Activated B cell treated with CpG ODN at 0.5 μM for 24 hours (primary cell): ENCODE measurements at regions of chr5 and their contacts with region 1.

Region 1: DNA sequence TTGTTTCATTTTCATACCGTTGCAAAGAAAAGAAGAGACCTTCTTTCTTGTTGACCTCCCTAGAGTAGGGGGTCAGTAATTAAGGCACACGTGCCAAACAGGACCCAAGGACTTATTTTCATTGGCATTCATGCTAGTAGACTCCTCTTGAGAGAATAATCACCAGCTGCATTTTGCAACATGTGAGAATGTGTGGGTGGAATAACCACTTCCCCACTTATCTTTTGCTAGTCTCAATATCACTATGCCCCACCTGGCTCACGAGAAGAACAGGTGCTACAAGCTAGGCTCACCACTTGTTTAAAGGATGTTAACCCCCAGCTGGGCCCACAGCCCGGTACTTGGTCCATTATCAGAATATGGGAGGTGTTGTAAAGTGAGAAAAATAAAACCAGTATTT is 460.7 kb upstream of the MEF2C start:
- DNase-seq: peak; percentile 29
- ATAC-seq: peak; percentile 79
- H3K4me3 Mint-ChIP-seq: peak overlapping the region; percentile 42
- H3K27ac Mint-ChIP-seq: peak overlapping the region; percentile 80
- H3K4me1 Mint-ChIP-seq: peaks cover 49% of the 10 kb centered on the region
- H3K27me3 Mint-ChIP-seq: no peaks in the 10 kb centered on the region
- CTCF ChIP-seq: no peak

Region 2: DNA sequence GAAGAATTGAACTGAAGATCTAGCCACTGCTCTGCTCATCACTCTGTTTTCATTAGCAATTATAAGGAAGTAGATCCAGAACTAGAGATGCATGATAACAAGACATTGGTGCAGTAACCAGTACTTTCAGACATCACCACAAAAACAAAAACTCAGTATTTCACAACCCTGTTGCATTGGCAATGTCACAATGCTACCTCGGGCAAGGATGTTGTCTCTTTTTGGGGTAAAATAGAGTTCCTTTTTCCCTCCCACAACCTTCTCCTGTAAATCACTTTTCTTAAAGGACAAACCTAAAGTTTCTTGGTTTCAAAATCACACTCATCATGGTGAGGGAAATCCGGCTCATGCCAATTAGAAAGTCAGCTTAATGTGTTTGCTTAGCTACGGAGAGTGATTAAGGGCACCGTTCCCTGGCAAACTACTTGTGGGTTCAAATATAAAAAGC is 40.6 kb before region 1 on chr5:
- CTCF ChIA-PET with region 1: no interaction called
- POLR2A ChIA-PET with region 1: interaction called, 17 read pairs
- intact Hi-C with region 1: no loop called
- DNase-seq: no peak
- ATAC-seq: peak; percentile 64
- H3K4me3 Mint-ChIP-seq: no peak overlapping the region
- H3K27ac Mint-ChIP-seq: peak overlapping the region; percentile 84
- H3K4me1 Mint-ChIP-seq: peaks cover 62% of the 10 kb centered on the region
- H3K27me3 Mint-ChIP-seq: no peaks in the 10 kb centered on the region
- CTCF ChIP-seq: no peak